ENCODE measurements at regions of chr12 and their contacts with region 1.

Region 1: GRCh38 chr12:47819896-47820630 is at the start of gene HDAC7:
- DNase-seq: peak; percentile 86 to 90
- ATAC-seq: peak; percentile 52 to 74
- H3K4me3 ChIP-seq: peak within 1 kb of the TSS; percentile 89
- H3K27ac ChIP-seq: peak within 1 kb of the TSS; percentile 96 to 100
- H3K4me1 ChIP-seq: peaks cover 68% of the 10 kb centered on the region
- CTCF ChIP-seq: no peak
- EP300 ChIP-seq: 0 out of 5 replicates have a peak, but pooled peaks have one; percentile 23 to 29
- POLR2A ChIP-seq: peak; percentile 82
- RAD21 ChIP-seq: no peak
- polyA plus RNA-seq, gene HDAC7: 17.2 and 20.8 TPM in 2 replicates

Region 2: DNA sequence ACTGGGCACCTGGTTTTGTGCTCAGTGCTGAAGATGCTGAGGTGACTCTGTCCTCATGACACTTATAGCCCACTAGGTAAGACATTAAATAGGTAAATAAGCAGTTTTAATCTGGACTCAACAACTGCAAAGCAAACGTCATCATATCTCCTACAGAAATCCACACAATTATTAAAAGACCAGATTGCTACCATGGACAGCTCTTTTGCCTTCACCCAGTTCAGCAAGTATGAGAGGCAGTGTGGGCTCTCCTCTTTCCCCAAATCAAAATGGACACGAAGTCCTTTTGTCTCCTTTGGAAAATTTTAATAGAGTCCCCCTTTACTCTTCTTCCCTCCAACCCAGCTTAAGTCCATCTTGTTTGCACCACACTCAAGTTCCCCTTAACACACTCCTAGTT is 285.4 kb before region 1 on chr12:
- CTCF ChIA-PET with region 1: no interaction called
- POLR2A ChIA-PET with region 1: no interaction called
- DNase-seq: no peak
- ATAC-seq: no peak
- H3K4me3 ChIP-seq: no peak overlapping the region
- H3K27ac ChIP-seq: no peak overlapping the region
- H3K4me1 ChIP-seq: no peaks in the 10 kb centered on the region
- CTCF ChIP-seq: no peak
- EP300 ChIP-seq: no peak
- POLR2A ChIP-seq: no peak
- RAD21 ChIP-seq: no peak

Region 3: GRCh38 chr12:47773062-47773857 is 46.8 kb before region 1 on chr12 and contains the start of gene SLC48A1:
- CTCF ChIA-PET with region 1: interaction called, 1,532 read pairs
- POLR2A ChIA-PET with region 1: no interaction called
- DNase-seq: peak; percentile 72 to 92
- ATAC-seq: peak; percentile 81 to 82
- H3K4me3 ChIP-seq: peak within 1 kb of the TSS; percentile 79
- H3K27ac ChIP-seq: peak within 1 kb of the TSS; percentile 84 to 96
- H3K4me1 ChIP-seq: peaks cover 71% of the 10 kb centered on the region
- CTCF ChIP-seq: peak; percentile 71
- EP300 ChIP-seq: no peak
- POLR2A ChIP-seq: peak; percentile 82
- RAD21 ChIP-seq: peak in 1 of 2 experiments; percentile 23; a peak in 1 of 5 replicates
- polyA plus RNA-seq, gene SLC48A1: 25.1 and 27.3 TPM in 2 replicates

Region 4: GRCh38 chr12:47990351-47991105 is 170.5 kb after region 1 on chr12:
- CTCF ChIA-PET with region 1: no interaction called
- POLR2A ChIA-PET with region 1: no interaction called
- DNase-seq: no peak
- ATAC-seq: no peak
- H3K4me3 ChIP-seq: no peak overlapping the region
- H3K27ac ChIP-seq: no peak overlapping the region
- H3K4me1 ChIP-seq: no peaks in the 10 kb centered on the region
- CTCF ChIP-seq: no peak
- EP300 ChIP-seq: no peak
- POLR2A ChIP-seq: no peak
- RAD21 ChIP-seq: no peak

Region 5: GRCh38 chr12:48542300-48542928 is 722.4 kb after region 1 on chr12:
- CTCF ChIA-PET with region 1: no interaction called
- POLR2A ChIA-PET with region 1: no interaction called
- DNase-seq: peak; percentile 21 to 59
- ATAC-seq: peak; percentile 73 to 90; a peak in 5 of 6 replicates
- H3K4me3 ChIP-seq: no peak overlapping the region
- H3K27ac ChIP-seq: no peak overlapping the region
- H3K4me1 ChIP-seq: no peaks in the 10 kb centered on the region
- CTCF ChIP-seq: peak; percentile 73
- EP300 ChIP-seq: no peak
- POLR2A ChIP-seq: no peak
- RAD21 ChIP-seq: peak; percentile 73 to 92